Activated CD8-positive, alpha-beta memory T cell treated with anti-CD3 and anti-CD28 coated beads, Interleukin-2, amount 10 ng/mL, durations not matched to agents 7 days and 5 days (primary cell): ENCODE measurements at regions of chr16 and their contacts with region 1.

Region 1: GRCh38 chr16:28211712-28212534 is at the start of gene XPO6:
- DNase-seq: peak; percentile 98
- ATAC-seq: peak; percentile 82
- H3K4me3 Mint-ChIP-seq: peak within 1 kb of the TSS; percentile 93
- H3K27ac Mint-ChIP-seq: peak within 1 kb of the TSS; percentile 94
- H3K4me1 Mint-ChIP-seq: peaks cover 37% of the 10 kb centered on the region
- H3K27me3 Mint-ChIP-seq: no peaks in the 10 kb centered on the region
- total RNA-seq, gene XPO6: 204 to 267 TPM

Region 2: DNA sequence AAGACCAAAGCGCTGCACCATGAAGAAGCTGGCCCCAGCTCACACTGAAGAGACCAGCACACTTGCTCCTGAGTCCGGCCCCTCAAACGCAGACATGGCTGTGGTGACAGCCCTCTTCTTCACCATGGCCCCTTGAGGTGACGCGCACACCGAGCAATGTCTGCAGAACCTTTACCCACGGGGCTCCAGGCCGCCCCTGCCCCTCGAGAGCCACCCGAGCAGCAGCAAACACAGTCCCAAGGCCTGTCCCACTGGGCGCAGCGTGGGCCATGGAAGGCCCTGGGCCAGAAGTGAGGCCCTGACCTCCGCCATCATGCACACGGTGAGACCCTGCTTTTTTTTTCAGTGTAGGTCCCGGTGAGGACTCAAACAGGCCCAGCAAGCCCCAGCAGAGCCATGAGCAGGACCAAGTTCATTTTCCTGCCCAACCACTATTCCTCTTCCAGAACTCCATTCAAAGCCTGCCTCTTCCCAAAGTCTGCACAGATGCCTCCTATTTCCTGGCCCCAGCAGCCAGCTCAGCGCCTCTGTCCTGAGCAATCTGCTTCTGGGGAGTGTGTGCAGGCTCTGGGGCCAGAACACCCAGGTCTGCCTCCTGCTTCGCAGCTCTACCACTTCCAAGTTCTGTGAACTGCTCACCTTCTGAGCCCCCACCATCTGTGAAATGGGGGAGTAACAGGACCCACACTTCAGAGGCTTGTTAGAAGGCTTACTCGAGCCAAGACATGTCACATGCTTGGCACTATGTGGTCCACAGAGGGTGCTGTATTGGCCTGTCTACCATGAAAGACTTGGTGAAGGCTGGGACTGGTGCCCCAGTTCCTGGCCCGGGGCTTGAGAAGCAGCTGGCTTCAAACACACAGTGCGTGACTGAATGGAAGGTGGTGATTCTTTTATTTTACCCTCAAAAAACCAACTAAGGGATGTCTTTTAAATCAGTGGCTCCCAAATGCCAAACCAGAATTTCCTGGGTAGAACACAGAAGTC is 112.7 kb before region 1 on chr16:
- CTCF ChIA-PET with region 1: no interaction called
- DNase-seq: no peak
- ATAC-seq: no peak
- H3K4me3 Mint-ChIP-seq: no peak overlapping the region
- H3K27ac Mint-ChIP-seq: no peak overlapping the region
- H3K4me1 Mint-ChIP-seq: no peaks in the 10 kb centered on the region
- H3K27me3 Mint-ChIP-seq: no peaks in the 10 kb centered on the region

Region 3: DNA sequence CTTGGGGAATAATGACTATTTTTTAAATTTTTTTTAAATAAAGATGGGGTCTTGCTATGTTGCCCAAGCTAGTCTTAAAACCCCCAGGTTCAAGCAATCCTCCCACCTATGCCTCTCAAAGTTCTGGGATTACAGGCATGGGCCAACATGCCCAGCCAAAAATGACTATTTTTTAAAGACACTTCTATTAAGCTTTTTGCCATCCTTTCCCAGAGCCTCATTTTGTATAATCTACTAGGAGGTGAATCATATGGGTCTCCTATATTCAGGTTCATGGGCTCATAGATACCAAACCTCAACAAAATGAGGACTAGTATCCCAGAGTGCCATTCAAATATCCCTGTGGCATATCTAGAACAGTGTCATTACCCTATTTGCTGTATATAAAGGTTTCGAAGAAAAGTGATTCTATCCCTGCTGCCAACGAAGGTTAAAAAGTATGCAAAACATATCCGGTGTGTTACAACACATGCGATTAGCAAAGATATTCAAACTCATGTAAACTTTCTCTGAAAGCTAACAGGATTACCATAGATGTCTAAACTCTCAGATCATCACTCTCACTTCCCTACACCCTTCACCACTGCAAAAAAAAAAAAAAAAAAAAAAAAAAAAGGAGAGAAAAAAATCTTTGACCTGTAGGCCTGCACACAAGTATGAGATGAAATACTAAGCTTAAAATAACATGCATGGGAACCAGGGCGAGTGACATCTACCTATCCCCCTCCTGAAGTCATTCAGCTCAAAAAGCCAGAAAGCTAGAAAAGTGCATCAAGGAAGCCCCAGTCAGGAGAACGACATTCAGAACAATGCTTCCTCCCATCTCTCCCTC is 23.6 kb before region 1 on chr16:
- CTCF ChIA-PET with region 1: interaction called, 58 read pairs
- DNase-seq: no peak
- ATAC-seq: no peak
- H3K4me3 Mint-ChIP-seq: peak overlapping the region; percentile 59
- H3K27ac Mint-ChIP-seq: peak overlapping the region; percentile 94
- H3K4me1 Mint-ChIP-seq: peaks cover 87% of the 10 kb centered on the region
- H3K27me3 Mint-ChIP-seq: no peaks in the 10 kb centered on the region

Region 4: GRCh38 chr16:28193530-28194423 is 18.1 kb before region 1 on chr16:
- CTCF ChIA-PET with region 1: interaction called, 58 read pairs
- DNase-seq: peak; percentile 64
- ATAC-seq: peak; percentile 46
- H3K4me3 Mint-ChIP-seq: peak overlapping the region; percentile 74
- H3K27ac Mint-ChIP-seq: peak overlapping the region; percentile 98
- H3K4me1 Mint-ChIP-seq: peaks cover 77% of the 10 kb centered on the region
- H3K27me3 Mint-ChIP-seq: no peaks in the 10 kb centered on the region

Region 5: DNA sequence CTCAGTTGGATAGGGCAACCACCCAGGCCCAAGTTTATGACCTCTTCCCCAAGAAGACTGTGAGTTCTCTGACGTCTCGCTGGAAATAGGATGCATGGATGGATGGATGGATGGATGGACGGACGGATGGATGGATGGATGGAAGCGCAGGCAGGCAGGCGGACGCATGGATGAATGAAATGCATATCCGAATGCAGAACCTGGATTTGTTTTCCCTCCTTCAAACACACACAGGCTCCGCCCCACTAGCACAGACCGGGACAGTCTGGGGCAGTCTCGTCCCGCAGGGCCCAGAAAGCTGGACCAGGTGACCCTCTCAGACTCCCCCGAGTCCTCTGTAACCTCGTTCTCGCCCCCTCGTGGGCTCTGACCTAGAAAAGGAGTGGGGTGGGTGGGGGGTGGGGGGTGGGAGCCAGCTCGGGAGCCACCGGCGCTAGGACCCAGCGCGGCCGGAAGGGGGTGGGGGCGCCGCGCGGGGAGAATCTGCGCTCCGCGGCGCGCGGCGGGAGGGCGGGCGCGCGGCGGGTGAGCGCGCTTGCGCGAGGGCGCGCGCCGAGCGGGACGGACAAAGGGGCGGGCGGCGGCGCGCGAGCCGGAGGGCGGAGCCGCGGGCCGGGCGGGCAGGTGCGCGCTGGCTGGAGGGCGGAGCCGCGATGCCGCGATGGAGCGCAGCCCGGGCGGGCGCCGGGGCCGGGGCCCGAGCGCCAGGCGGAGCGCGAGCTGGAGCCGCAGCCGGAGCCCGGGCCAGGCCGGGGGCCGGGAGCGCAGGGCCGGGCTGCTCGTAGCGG is 80.1 kb after region 1 on chr16 and contains the start of gene SBK1:
- CTCF ChIA-PET with region 1: no interaction called
- DNase-seq: peak; percentile 85
- ATAC-seq: peak; percentile 97
- H3K4me3 Mint-ChIP-seq: peak within 1 kb of the TSS; percentile 84
- H3K27ac Mint-ChIP-seq: peak within 1 kb of the TSS; percentile 84
- H3K4me1 Mint-ChIP-seq: peaks cover 54% of the 10 kb centered on the region
- H3K27me3 Mint-ChIP-seq: peaks cover 14% of the 10 kb centered on the region
- total RNA-seq, gene SBK1: 3.2 to 11.3 TPM